Activated CD8-positive, alpha-beta T cell treated with anti-CD3 and anti-CD28 coated beads for 36 hours (primary cell): ENCODE measurements at regions of chrX and their contacts with region 1.

Region 1: DNA sequence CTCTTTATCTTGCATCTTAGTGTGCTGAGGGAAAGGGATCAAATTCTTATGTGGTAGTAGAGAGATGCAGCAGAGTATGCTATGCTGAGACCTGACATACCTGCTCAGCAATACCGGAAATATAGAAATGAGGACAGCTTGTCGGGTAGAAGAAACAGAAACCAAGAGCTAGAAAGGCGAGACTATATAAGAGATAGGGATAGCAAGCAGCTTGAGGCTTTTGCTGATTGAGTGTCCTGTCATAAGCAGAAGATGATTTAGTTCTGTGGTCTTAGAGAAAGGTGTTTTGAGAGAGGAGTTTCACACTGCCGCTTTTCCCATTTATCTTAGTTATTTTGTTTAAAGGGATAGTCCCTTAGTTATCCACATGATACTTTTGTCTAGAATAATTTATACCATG is 31.7 kb downstream of the USP9X start:
- DNase-seq: no peak
- ATAC-seq: peak; percentile 78
- H3K4me3 Mint-ChIP-seq: peak overlapping the region; percentile 25
- H3K27ac Mint-ChIP-seq: peak overlapping the region; percentile 86
- H3K4me1 Mint-ChIP-seq: peaks cover 71% of the 10 kb centered on the region
- H3K27me3 Mint-ChIP-seq: no peaks in the 10 kb centered on the region
- CTCF ChIP-seq: no peak

Region 2: GRCh38 chrX:40877887-40878286 is 239.1 kb before region 1 on chrX:
- CTCF ChIA-PET with region 1: interaction called, 17 read pairs
- POLR2A ChIA-PET with region 1: no interaction called
- intact Hi-C with region 1: loop called (anchors 10 kb)
- DNase-seq: no peak
- ATAC-seq: no peak
- H3K4me3 Mint-ChIP-seq: no peak overlapping the region
- H3K27ac Mint-ChIP-seq: no peak overlapping the region
- H3K4me1 Mint-ChIP-seq: peaks cover 3% of the 10 kb centered on the region
- H3K27me3 Mint-ChIP-seq: no peaks in the 10 kb centered on the region
- CTCF ChIP-seq: peak; percentile 43

Region 3: DNA sequence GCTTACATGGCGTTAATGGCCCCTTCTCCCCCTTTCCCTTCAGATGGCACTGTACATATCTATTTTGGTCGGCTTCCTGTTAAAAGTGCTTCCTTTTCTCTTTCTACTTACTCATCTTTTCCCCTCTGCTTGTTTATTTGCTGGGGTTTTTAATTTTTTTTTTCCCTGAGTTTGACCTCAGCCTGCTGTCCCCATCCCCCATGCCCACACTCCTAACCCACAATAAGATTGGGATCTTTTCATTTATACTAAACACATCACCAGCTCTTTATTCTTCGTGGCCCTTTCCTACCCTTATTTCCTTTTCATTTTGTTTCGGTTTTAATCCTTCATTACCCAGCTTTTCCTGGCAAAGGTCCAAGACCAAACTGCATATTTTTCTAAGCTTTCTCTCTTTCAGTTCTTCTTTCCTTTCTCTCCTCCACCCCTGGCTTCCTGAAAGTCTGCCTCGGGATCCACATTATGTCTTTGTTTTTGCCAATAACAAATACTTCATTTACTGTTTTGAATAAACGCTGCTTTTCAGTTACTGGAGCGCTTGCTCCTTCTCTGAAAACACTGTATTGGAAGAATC is 183.7 kb before region 1 on chrX:
- CTCF ChIA-PET with region 1: no interaction called
- POLR2A ChIA-PET with region 1: no interaction called
- intact Hi-C with region 1: loop called (anchors 5 kb)
- DNase-seq: peak; percentile 33
- ATAC-seq: peak; percentile 46
- H3K4me3 Mint-ChIP-seq: peak overlapping the region; percentile 67
- H3K27ac Mint-ChIP-seq: peak overlapping the region; percentile 94
- H3K4me1 Mint-ChIP-seq: peaks cover 20% of the 10 kb centered on the region
- H3K27me3 Mint-ChIP-seq: no peaks in the 10 kb centered on the region
- CTCF ChIP-seq: no peak

Region 4: GRCh38 chrX:41010188-41010846 is 106.6 kb before region 1 on chrX:
- CTCF ChIA-PET with region 1: interaction called, 11 read pairs
- POLR2A ChIA-PET with region 1: no interaction called
- intact Hi-C with region 1: no loop called
- DNase-seq: peak; percentile 72
- ATAC-seq: peak; percentile 90
- H3K4me3 Mint-ChIP-seq: peak overlapping the region; percentile 57
- H3K27ac Mint-ChIP-seq: peak overlapping the region; percentile 75
- H3K4me1 Mint-ChIP-seq: peaks cover 24% of the 10 kb centered on the region
- H3K27me3 Mint-ChIP-seq: no peaks in the 10 kb centered on the region
- CTCF ChIP-seq: no peak

Region 5: GRCh38 chrX:41084044-41084892 is 32.7 kb before region 1 on chrX:
- CTCF ChIA-PET with region 1: interaction called, 10 read pairs
- POLR2A ChIA-PET with region 1: interaction called, 14 read pairs
- intact Hi-C with region 1: loop called (anchors 2 kb)
- DNase-seq: peak; percentile 97
- ATAC-seq: peak; percentile 70
- H3K4me3 Mint-ChIP-seq: peak overlapping the region; percentile 88
- H3K27ac Mint-ChIP-seq: peak overlapping the region; percentile 100
- H3K4me1 Mint-ChIP-seq: peaks cover 18% of the 10 kb centered on the region
- H3K27me3 Mint-ChIP-seq: no peaks in the 10 kb centered on the region
- CTCF ChIP-seq: no peak

Region 6: DNA sequence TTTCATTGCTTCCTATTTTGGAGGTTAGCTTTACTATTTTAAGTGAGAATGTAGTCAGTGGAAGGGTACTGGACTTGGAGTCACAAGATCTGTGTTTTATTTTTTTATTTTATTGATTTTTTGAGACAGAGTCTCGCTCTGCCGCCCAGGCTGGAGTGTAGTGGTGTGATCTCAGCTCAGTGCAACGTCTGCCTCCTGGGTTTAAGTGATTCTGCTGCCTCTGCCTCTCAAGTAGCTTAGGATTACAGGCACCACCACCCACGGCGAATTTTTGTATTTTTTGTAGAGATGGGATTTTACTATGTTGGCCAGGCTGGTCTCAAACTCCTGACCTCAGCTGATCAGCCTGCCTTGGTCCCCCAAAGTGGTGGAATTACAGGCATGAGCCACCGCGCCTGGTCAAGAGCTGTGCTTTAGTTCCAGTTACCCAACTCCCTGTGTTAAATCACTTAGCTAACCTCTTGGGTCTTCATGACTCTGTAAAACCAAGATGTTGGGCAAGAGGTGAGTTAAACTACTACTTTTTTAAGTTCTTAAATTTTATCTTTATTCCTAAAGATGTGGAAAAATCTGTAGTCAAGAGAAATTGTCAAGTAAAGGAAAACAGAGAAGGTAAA is 20.5 kb before region 1 on chrX:
- CTCF ChIA-PET with region 1: interaction called, 13 read pairs
- POLR2A ChIA-PET with region 1: interaction called, 4 read pairs
- intact Hi-C with region 1: no loop called
- DNase-seq: no peak
- ATAC-seq: no peak
- H3K4me3 Mint-ChIP-seq: no peak overlapping the region
- H3K27ac Mint-ChIP-seq: no peak overlapping the region
- H3K4me1 Mint-ChIP-seq: peaks cover 62% of the 10 kb centered on the region
- H3K27me3 Mint-ChIP-seq: no peaks in the 10 kb centered on the region
- CTCF ChIP-seq: no peak